Endothelial cell of umbilical vein (primary cell): ENCODE measurements at regions of chr7 and their contacts with region 1.

Region 1: DNA sequence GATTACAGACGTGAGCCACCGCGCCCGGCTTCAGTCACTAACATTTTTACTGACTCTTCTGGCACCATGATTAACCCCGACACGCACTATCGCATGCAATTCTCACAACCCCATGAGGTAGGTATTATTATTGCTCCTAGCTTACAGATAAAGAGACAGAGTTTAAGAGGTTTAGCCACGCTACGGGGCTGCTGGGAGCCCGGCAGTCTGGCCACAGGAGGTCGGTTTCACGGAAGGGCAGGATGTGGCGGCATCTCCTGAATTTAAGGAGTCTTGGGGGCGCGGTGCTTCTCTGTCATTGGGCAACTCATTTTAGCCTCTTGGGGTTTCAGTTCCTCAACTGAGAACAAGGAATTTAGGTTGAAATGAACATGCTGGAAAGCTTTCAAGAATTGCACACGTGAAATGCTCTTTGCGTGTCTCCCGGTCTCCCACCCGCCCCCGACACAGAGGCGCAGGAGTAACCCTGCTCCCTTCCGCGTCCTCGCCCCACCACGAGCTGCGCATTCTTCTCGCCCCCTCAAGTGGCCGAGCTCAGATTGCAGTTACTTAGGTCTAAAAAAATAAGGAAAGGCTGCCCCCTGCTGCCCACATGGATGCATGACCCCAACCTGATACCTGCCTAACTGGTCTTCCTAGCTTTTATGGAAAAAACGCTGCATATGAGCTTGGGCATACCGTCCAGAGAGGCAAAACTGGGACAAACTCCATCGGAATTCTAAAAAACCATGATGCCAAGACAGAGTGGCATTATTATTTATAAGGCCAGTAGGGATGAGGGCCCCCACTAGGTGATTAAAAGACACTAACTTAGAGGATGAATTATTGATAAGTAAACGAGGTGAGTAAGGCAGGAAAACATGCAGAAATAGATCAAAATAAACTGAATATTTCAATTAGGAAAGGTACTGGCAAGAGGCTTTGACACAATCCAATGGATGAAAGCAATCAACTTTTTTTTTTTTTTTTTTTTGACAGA is 12.4 kb downstream of the PRSS2 start:
- DNase-seq: peak; percentile 88
- H3K4me3 ChIP-seq: peak overlapping the region; percentile 32 to 55 (median 49)
- H3K27ac ChIP-seq: no peak overlapping the region
- H3K4me1 ChIP-seq: peaks cover 3% of the 10 kb centered on the region
- H3K27me3 ChIP-seq: no peaks in the 10 kb centered on the region
- CTCF ChIP-seq: peak; percentile 92 to 98
- POLR2A ChIP-seq: no peak

Region 2: DNA sequence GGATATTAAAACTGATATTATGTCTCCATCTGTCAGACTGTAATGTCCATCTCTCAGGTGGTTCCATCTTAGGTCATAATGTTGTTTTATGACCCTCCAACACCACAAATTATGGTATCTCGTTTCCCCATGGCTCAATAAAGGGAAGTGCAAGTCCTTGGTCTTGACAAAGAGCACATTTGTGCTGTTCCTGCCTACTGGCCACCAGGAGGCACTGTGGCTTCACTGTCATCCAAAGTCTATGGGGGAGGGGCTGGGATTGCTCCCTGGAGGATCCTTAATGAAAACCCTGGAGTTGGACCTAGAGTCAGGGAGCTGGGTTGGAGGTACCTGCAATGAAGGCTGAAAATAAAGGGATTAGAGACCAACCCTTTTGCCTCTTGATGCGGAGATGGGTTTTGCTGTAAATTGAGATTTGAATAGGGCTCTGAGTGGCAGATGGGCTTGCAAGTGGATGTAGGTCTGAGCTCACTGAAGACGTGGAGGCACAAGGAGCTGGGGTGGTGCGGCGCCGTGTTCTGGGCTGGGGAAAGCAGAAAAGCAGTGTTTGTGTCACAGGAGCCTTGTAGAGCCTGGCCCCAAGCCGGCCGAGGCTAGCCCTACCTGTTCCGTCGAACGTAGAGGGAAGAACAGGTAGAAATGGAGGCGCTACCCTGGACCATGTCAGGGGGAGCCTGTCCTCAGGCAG is 344.8 kb before region 1 on chr7:
- CTCF ChIA-PET with region 1: interaction called, 7 read pairs
- POLR2A ChIA-PET with region 1: no interaction called
- dilution Hi-C with region 1: no loop called
- intact Hi-C with region 1: loop called (anchors 1 kb)
- DNase-seq: peak; percentile 38
- H3K4me3 ChIP-seq: no peak overlapping the region
- H3K27ac ChIP-seq: no peak overlapping the region
- H3K4me1 ChIP-seq: peaks cover 27% of the 10 kb centered on the region
- H3K27me3 ChIP-seq: no peaks in the 10 kb centered on the region
- CTCF ChIP-seq: peak; percentile 81 to 98
- POLR2A ChIP-seq: no peak

Region 3: DNA sequence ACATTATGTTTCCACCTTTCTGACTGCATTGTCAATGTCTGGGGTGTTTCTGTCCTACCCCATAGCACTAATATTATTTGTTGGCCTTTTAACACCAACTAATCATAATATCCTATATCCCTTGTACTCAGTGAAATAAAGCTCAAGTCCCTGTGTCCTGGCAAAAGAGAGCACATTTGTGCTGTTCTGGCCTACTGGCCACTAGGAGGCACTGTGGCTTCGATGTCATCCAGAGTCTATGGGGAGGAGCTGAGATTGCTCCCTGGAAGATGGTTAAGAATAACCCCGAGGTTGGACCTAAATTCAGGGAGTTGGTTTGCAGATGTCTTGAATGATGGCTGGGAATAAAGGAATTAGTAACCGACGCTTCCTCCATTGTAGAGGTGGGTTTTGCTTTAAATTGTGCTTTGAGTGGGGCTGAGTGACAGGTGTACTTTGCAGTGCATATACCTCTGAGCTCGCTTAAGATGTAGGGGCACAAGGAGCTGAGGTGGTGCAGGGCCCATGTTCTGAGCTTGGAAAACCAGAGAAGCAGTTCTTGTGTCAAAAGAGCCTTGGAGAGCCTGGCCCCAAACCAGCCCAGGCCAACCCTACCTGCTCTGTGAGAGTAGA is 225.1 kb before region 1 on chr7:
- CTCF ChIA-PET with region 1: interaction called, 20 read pairs
- POLR2A ChIA-PET with region 1: no interaction called
- dilution Hi-C with region 1: no loop called
- intact Hi-C with region 1: no loop called
- DNase-seq: peak; percentile 48
- H3K4me3 ChIP-seq: no peak overlapping the region
- H3K27ac ChIP-seq: peak overlapping the region; percentile 70
- H3K4me1 ChIP-seq: peaks cover 40% of the 10 kb centered on the region
- H3K27me3 ChIP-seq: no peaks in the 10 kb centered on the region
- CTCF ChIP-seq: peak; percentile 62 to 89
- POLR2A ChIP-seq: no peak

Region 4: DNA sequence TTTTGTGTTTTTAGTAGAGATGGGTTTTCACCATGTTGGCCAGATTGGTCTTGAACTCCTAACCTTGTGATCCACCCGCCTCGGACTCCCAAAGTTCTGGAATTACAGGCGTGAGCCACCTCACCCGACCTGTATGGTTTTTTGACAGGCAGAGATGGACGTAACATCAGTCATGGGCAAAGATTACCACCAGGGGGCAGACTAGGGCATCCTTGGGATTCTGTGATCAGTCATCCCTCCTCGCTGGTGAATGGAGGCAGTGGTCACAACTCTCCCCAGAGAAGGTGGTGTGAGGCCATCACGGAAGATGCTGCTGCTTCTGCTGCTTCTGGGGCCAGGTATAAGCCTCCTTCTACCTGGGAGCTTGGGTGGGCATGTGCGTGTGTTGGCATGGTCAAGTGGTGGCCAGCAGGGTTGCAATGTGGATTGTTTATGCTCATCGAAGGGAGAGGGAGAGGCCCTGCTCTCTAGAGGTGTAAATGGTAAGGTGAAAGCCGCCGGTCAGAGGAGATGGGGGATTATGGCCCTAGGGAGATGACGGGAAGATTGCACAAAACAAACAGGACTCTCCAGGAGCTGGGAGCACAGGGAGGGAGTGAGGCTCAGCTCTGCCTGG is 156.7 kb before region 1 on chr7:
- CTCF ChIA-PET with region 1: interaction called, 141 read pairs
- POLR2A ChIA-PET with region 1: no interaction called
- dilution Hi-C with region 1: no loop called
- intact Hi-C with region 1: no loop called
- DNase-seq: peak; percentile 45
- H3K4me3 ChIP-seq: no peak overlapping the region
- H3K27ac ChIP-seq: no peak overlapping the region
- H3K4me1 ChIP-seq: no peaks in the 10 kb centered on the region
- H3K27me3 ChIP-seq: no peaks in the 10 kb centered on the region
- CTCF ChIP-seq: peak; percentile 60 to 76
- POLR2A ChIP-seq: no peak

Region 5: DNA sequence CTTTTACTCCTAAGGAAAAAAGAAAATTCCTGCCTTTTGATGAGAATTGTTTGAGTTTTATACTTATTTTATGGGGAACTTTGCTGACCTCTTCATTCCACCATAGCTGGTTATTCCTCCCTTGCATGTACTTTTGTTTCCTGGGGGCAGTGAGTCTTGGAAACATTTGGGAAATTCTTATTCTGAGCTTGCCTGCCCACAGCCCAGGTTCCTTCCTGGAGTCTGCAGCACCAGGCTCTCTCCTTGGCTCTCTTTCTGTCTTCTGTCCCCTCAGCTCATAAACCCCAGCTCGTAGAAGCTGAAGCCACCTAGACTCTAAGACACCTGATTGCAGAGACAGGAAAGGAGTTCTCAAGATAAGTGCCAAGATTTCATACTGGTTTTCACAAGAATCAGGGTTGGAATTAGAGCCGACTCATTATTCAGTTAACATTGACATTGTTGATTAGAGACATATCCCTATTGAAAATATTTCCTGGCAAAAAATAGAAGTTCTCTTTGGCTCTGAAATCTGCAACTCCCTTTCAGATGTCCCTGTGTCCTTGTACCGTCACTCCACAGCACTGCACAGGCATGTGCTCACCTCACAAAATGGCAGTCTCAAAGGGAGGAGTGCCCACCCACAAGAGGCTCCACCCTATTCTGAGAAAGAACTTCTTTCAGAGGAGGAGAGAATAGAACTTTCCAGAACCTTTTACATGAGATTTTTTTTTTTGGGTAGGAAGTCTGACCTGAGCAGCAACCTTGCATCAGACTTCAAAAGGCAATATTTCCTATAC is 101.7 kb before region 1 on chr7:
- CTCF ChIA-PET with region 1: interaction called, 15 read pairs
- POLR2A ChIA-PET with region 1: no interaction called
- dilution Hi-C with region 1: no loop called
- intact Hi-C with region 1: no loop called
- DNase-seq: no peak
- H3K4me3 ChIP-seq: no peak overlapping the region
- H3K27ac ChIP-seq: no peak overlapping the region
- H3K4me1 ChIP-seq: no peaks in the 10 kb centered on the region
- H3K27me3 ChIP-seq: peaks cover 0 to 6% of the 10 kb centered on the region in 2 experiments
- CTCF ChIP-seq: no peak
- POLR2A ChIP-seq: no peak

Region 6: DNA sequence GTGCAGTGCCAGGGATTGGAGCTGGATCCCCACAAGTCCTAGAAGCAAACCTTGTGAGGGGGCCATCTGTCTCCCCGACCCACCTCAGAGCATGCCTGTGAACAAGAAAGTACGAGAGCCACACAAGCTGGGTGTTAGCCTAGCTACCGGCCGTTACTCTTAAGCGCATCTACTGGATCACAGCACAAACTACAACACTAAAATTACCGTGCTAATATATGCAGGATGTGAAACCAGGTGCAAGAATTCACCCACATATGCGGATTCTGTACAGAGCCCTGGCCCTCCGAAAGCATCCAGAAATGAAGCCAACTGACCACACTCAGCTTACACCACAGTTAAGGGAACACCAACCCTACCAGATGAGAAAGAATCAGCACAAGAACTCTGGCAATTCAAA is 49.9 kb before region 1 on chr7:
- CTCF ChIA-PET with region 1: interaction called, 15 read pairs
- POLR2A ChIA-PET with region 1: no interaction called
- dilution Hi-C with region 1: no loop called
- intact Hi-C with region 1: no loop called
- DNase-seq: no peak
- H3K4me3 ChIP-seq: no peak overlapping the region
- H3K27ac ChIP-seq: no peak overlapping the region
- H3K4me1 ChIP-seq: no peaks in the 10 kb centered on the region
- H3K27me3 ChIP-seq: peaks cover 8 to 20% of the 10 kb centered on the region in 2 experiments
- CTCF ChIP-seq: no peak
- POLR2A ChIP-seq: no peak

Region 7: DNA sequence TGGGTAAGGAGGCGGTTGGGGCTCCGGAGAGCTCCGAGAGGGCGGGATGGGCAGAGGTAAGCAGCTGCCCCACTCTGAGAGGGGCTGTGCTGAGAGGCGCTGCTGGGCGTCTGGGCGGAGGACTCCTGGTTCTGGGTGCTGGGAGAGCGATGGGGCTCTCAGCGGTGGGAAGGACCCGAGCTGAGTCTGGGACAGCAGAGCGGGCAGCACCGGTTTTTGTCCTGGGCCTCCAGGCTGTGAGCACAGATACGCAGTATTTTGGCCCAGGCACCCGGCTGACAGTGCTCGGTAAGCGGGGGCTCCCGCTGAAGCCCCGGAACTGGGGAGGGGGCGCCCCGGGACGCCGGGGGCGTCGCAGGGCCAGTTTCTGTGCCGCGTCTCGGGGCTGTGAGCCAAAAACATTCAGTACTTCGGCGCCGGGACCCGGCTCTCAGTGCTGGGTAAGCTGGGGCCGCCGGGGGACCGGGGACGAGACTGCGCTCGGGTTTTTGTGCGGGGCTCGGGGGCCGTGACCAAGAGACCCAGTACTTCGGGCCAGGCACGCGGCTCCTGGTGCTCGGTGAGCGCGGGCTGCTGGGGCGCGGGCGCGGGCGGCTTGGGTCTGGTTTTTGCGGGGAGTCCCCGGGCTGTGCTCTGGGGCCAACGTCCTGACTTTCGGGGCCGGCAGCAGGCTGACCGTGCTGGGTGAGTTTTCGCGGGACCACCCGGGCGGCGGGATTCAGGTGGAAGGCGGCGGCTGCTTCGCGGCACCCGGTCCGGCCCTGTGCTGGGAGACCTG is 13.6 kb after region 1 on chr7:
- CTCF ChIA-PET with region 1: interaction called, 36 read pairs
- POLR2A ChIA-PET with region 1: no interaction called
- dilution Hi-C with region 1: no loop called
- intact Hi-C with region 1: no loop called
- DNase-seq: no peak
- H3K4me3 ChIP-seq: peak overlapping the region; percentile 62 to 76 (median 69)
- H3K27ac ChIP-seq: peak overlapping the region; percentile 63
- H3K4me1 ChIP-seq: peaks cover 28% of the 10 kb centered on the region
- H3K27me3 ChIP-seq: no peaks in the 10 kb centered on the region
- CTCF ChIP-seq: no peak
- POLR2A ChIP-seq: no peak

Region 8: DNA sequence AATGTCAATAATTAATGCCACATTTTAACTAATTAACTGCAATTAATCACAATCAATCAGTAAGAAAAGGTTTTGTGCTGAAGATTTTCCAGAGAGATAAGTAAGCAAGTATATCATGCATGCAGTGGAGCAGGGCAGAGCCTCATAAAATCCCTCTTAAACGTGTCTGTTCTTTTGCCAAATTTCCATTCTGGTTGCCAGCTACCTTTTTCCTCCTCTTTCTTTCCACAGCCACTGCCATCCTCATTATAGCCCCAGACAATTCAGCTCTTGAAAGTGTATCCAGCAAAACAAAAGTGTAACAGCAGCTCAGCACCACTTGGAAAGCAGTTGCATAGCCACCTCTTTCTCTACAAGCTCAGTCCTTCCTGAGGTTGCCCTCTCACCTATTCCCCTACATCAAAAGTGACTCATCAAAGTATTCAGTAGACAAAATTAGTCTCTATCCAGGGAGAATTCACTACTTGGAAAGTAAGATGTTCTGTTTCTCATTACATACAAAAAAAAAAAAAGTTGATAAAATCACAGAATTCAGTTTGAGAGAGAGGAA is 44.8 kb after region 1 on chr7:
- CTCF ChIA-PET with region 1: no interaction called
- POLR2A ChIA-PET with region 1: no interaction called
- dilution Hi-C with region 1: no loop called
- intact Hi-C with region 1: no loop called
- DNase-seq: no peak
- H3K4me3 ChIP-seq: no peak overlapping the region
- H3K27ac ChIP-seq: no peak overlapping the region
- H3K4me1 ChIP-seq: no peaks in the 10 kb centered on the region
- H3K27me3 ChIP-seq: peaks cover 2 to 21% of the 10 kb centered on the region in 2 experiments
- CTCF ChIP-seq: no peak
- POLR2A ChIP-seq: no peak

Region 9: DNA sequence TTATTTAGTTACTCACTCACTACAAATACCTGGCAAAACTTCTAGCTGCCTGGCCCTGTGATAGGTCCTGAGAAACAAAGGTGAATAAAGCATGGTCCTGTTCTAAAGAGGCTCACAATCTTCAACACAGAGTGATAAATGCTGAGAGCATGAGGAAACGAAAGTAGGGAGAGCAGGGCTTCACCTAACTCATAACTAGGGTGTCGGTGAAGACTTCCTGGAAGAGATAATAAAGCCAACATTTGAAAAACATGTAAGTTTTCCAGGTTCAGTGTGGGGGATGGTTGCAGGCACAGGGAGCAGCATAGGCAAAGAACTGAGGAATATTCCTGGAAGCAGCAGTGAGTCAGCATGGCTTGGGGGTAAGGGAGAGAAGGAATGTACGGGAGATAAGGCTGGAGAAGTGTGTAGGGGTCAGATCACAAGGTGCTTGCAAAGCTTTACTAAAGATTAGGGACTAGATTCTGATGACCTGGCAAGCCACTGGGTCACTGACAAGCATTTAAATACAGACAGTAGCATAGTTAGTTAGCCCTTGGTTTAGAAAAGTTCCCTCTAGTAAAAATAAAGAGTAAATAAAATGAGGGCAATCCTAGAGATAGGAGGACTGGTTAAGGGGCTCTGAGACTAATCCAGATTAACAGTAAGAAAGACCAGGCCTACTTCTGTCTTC is 173.9 kb after region 1 on chr7:
- CTCF ChIA-PET with region 1: no interaction called
- POLR2A ChIA-PET with region 1: no interaction called
- dilution Hi-C with region 1: no loop called
- intact Hi-C with region 1: no loop called
- DNase-seq: no peak
- H3K4me3 ChIP-seq: no peak overlapping the region
- H3K27ac ChIP-seq: no peak overlapping the region
- H3K4me1 ChIP-seq: no peaks in the 10 kb centered on the region
- H3K27me3 ChIP-seq: no peaks in the 10 kb centered on the region
- CTCF ChIP-seq: no peak
- POLR2A ChIP-seq: no peak